Panc1 (cell line): ENCODE measurements at regions of chr6 and their contacts with region 1.

Region 1: GRCh38 chr6:85354761-85355618 is 94.9 kb upstream of the NT5E start:
- DNase-seq: peak; percentile 75
- ATAC-seq: peak; percentile 96
- H3K4me3 ChIP-seq: no peak overlapping the region
- H3K27ac ChIP-seq: no peak overlapping the region
- H3K4me1 ChIP-seq: no peaks in the 10 kb centered on the region
- H3K27me3 ChIP-seq: no peaks in the 10 kb centered on the region
- CTCF ChIP-seq: peak; percentile 95

Region 2: GRCh38 chr6:85537055-85537494 is 182.1 kb after region 1 on chr6:
- CTCF ChIA-PET with region 1: interaction called, 4 read pairs
- POLR2A ChIA-PET with region 1: no interaction called
- in situ Hi-C with region 1: no loop called
- intact Hi-C with region 1: loop called (anchors 2 kb)
- DNase-seq: no peak
- ATAC-seq: no peak
- H3K4me3 ChIP-seq: no peak overlapping the region
- H3K27ac ChIP-seq: no peak overlapping the region
- H3K4me1 ChIP-seq: no peaks in the 10 kb centered on the region
- H3K27me3 ChIP-seq: no peaks in the 10 kb centered on the region
- CTCF ChIP-seq: peak; percentile 56; the same call in 1 of the 2 replicates

Region 3: DNA sequence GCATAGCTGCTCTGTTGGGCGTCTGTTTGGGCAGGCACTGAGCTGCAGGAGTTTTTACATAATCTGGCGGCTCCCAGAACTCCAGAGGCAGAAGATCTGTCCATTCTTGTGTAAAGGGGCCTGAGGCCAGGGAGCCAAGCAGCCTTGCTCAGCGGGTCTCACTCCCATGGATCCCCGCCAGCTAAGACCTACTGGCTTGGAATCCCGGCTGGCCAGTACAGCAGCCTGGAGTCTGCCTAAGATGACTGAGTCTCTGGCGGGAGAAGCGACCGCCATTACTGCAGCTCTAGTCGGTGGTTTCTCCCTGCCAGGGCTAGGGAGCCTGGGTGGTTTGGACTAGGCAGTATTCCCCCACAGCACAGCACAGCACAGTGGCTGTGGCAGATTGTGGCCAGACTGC is 556.1 kb after region 1 on chr6:
- CTCF ChIA-PET with region 1: no interaction called
- POLR2A ChIA-PET with region 1: no interaction called
- in situ Hi-C with region 1: no loop called
- intact Hi-C with region 1: no loop called
- DNase-seq: no peak
- ATAC-seq: peak; percentile 34; the same call in 1 of the 2 replicates
- H3K4me3 ChIP-seq: no peak overlapping the region
- H3K27ac ChIP-seq: no peak overlapping the region
- H3K4me1 ChIP-seq: no peaks in the 10 kb centered on the region
- H3K27me3 ChIP-seq: no peaks in the 10 kb centered on the region
- CTCF ChIP-seq: no peak